Brain microvascular endothelial cell (primary cell): ENCODE measurements at regions of chr7 and their contacts with region 1.

Region 1: DNA sequence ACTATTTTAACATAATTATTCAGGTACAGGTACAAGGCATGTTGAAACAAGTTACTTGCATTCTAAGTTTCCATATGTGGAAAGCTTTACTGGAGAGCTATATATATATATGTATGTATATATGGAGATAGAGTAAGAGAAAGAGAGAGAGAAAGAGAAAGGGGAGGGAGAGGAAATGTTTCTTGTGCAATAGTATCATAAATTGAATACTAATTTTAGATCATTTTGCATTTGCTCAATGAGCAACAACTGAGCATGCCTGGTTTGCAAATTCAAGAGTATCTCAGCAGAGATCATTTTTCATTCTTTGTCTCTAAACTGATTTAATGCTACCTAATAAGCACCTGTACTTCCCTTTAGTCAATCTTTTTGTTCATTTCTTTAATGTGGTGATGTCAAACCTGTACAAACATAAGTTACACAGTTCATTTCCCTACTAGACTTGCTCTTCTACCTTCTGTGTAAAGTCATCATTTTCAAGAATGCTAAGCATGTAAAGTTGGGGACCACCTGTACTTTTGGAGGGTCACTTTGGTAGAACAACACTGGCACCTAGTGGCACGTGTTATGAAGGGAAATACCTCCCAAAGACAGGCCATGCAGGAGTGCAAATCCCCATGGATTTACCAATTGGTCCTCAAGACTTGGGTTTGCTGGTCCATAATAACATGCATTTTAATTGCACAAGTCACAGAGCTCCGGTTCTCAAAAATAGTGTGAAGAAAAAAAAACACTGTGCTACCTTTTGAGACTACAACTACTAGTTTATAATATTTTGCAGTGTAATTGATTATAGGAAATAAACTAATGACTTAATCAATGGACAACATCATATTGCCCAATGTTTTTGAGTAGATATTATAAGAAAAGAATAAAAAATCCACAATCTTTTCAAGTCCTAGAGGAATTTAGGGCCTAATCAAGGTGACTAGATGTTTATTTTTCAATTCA is 431.2 kb upstream of the IGFBP3 start:
- DNase-seq: peak; percentile 65
- H3K4me3 ChIP-seq: no peak overlapping the region
- H3K27ac ChIP-seq: no peak overlapping the region
- H3K27me3 ChIP-seq: no peaks in the 10 kb centered on the region
- CTCF ChIP-seq: peak; percentile 76

Region 2: GRCh38 chr7:45917658-45918057 is 434.6 kb before region 1 on chr7:
- in situ Hi-C with region 1: loop called (anchors 25 kb)
- DNase-seq: peak; percentile 65
- H3K4me3 ChIP-seq: no peak overlapping the region
- H3K27ac ChIP-seq: no peak overlapping the region
- H3K27me3 ChIP-seq: no peaks in the 10 kb centered on the region
- CTCF ChIP-seq: peak; percentile 96

Region 3: DNA sequence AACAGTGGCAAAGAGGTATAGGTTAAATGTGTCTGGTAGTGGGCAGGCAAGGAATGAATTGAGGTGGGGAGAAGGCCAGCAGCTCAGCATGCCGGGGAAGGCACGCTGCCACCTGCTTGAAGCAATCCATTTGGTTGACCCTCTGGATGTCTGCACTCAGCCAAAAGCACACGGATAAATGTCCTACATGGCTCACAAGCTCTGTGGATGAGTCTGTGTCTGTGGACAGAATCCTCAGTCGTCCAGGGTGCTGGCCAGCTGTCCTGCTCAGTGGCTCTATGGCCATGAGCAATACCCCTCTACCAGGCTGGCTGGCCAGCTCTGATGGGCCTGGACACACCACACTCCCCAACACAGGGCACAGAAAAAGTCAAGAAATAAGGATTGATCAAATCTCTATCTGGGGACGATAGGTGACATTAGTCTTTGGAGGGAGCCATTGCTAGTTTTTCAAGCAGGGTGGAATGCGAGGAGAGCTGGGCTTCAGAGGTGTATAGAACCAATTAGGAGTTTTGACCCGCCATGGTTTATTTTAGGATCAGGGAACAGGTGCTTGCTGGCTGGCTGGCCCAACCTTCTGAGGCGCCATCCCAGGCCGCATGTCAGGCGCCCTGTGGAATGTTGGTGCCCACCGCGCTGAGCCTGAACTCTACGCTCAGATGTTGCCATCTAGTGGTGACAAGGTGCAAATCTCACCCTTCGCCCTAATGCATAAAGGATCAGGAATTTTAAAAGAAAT is 736.2 kb after region 1 on chr7:
- in situ Hi-C with region 1: loop called (anchors 25 kb)
- DNase-seq: peak; percentile 63
- H3K4me3 ChIP-seq: no peak overlapping the region
- H3K27ac ChIP-seq: no peak overlapping the region
- H3K27me3 ChIP-seq: no peaks in the 10 kb centered on the region
- CTCF ChIP-seq: peak; percentile 83